ENCODE measurements at regions of chr17 and their contacts with region 1.

Region 1: DNA sequence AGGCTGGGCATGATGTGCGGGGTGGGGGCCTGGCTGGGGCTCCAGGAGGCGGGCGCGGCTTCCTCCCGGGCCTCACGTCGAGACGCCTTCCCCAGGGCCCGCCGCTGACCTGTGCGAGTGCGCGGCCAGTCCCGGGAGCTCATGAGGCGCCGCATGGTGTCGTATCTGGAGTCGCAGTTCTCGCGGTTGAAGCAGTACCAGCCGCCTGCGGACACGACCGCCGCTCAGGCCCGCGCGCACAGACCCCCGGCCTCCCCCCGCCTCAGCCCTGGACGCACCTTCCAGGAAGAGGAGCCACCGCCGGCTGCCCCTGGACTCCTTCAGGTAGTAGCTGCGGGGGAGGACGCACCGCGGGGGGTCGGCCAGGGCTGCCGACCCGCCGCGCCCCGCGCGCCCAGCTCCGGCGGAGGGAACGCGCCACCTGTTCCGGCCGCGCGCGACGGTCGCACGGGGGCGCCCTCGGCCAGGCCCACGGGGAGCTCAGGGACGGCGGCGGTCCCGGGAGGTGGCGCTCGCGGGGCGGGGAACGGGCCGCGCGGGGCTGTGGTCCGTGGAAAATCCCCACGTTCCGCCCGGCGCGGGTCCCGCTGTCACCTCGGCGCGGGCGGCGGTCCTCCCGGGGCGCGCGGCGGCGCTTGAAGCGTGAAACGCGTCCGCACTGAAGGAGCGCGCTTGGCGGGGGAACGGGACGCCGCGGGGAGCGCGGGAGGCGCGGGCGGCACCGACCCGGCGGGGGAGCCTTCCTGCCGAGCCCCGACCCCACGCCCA is 1.4 kb downstream of the NOTUM start:
- DNase-seq: peak; percentile 78
- H3K4me3 Mint-ChIP-seq: peak overlapping the region; percentile 41
- H3K27ac Mint-ChIP-seq: no peak overlapping the region
- H3K4me1 Mint-ChIP-seq: peaks cover 4% of the 10 kb centered on the region
- H3K27me3 Mint-ChIP-seq: peaks cover 15% of the 10 kb centered on the region

Region 2: GRCh38 chr17:81994593-81995462 is 35.3 kb after region 1 on chr17:
- CTCF ChIA-PET with region 1: interaction called, 10 read pairs
- intact Hi-C with region 1: no loop called
- DNase-seq: no peak
- H3K4me3 Mint-ChIP-seq: no peak overlapping the region
- H3K27ac Mint-ChIP-seq: no peak overlapping the region
- H3K4me1 Mint-ChIP-seq: peaks cover 4% of the 10 kb centered on the region
- H3K27me3 Mint-ChIP-seq: no peaks in the 10 kb centered on the region

Region 3: DNA sequence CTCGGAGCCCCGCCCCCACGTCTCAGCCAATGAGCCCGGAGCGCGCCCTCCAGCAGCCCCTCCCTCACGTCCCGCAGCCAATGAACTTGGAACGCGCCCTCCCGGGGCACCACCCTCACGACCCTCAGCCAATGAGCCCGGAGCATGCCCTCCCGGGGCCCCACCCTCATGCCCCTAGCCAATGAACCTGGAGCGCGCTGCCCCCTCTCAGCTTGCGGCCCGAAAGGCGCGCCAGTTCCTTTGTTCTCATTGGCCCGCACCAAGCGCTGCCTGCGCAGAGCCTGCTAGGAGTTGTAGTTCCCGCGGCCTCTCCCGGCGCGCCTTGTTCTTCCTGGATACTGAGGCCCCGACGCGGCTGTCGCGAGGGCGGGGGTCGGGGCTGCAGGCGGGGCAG is 63.4 kb after region 1 on chr17 and contains the start of gene LRRC45:
- CTCF ChIA-PET with region 1: interaction called, 95 read pairs
- intact Hi-C with region 1: loop called (anchors 1 kb)
- DNase-seq: peak; percentile 100
- H3K4me3 Mint-ChIP-seq: peak within 1 kb of the TSS; percentile 86
- H3K27ac Mint-ChIP-seq: no peak within 1 kb of the TSS
- H3K4me1 Mint-ChIP-seq: peaks cover 22% of the 10 kb centered on the region
- H3K27me3 Mint-ChIP-seq: no peaks in the 10 kb centered on the region
- total RNA-seq, gene LRRC45: 12.0 to 12.5 TPM

Region 4: DNA sequence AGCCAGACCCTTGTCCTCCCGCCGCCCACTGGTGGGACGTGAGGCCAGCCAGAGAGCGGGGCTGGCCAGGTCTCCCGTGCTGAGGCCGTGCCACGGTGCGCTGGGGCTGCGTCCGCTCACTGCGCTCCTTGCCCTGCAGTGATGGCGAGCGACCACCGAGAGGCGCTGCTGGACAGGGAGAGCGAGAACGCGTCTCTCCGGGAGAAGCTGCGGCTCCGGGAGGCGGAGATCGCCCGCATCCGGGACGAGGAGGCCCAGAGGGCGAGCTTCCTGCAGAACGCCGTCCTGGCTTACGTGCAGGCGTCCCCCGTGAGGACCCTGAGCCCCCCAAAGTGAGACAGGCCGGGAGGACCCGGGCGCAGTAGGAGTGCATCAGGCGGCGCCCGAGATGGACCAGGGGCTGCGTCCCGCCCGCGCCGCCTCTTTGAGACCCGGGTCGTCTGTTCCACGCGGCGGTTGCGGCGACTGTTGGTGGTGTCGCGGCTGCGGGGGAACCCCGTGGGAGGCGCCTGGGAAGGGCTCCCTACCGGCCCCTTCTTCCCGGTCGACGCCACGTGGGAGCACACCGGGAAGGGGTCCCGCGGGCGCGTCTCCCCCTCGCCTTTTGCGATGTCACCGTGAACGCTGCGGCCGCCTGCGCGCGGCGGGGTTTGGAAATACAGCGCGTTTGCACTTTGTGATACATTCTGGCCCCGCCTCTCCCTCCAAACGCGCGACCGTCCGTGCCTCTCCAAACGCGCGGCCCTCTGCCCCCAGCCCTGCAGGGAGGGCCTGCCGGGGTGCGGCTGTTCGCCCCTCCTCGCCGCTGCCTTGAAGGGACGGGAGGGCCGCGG is 71.1 kb after region 1 on chr17:
- CTCF ChIA-PET with region 1: interaction called, 16 read pairs
- intact Hi-C with region 1: no loop called
- DNase-seq: peak; percentile 90
- H3K4me3 Mint-ChIP-seq: peak overlapping the region; percentile 76
- H3K27ac Mint-ChIP-seq: no peak overlapping the region
- H3K4me1 Mint-ChIP-seq: peaks cover 8% of the 10 kb centered on the region
- H3K27me3 Mint-ChIP-seq: no peaks in the 10 kb centered on the region

Region 5: DNA sequence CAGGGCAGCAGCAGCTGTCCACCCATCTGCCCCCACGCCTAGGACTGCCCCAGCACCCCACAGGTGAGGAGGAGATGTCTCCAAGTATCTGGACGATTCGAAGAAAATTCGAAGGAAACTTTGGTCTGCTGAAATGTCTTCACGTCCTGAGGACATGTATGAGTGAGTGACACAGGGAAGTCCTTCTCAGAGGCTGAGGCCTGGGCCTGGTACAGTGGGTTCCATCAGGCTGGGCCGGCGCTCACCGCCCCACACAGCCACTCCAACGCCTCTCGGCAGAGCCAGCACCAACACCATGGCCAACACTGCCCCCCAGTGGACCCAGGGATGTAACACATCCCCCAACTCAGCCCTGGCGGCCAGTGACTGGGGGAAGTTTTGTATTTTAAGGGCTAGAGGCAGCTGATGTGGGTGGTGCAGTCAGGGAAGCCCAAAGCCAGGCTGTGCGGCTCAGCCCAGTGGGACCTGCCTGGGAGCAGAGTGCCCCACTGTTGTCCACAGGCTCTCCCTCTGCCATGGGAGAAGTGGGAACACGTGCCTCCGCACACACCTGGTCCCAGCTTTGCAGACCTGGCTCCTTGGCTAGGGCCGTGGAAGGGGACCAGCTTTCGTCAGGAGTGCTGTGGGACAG is 194.3 kb after region 1 on chr17:
- CTCF ChIA-PET with region 1: no interaction called
- intact Hi-C with region 1: loop called (anchors 5 kb)
- DNase-seq: peak; percentile 88
- H3K4me3 Mint-ChIP-seq: no peak overlapping the region
- H3K27ac Mint-ChIP-seq: no peak overlapping the region
- H3K4me1 Mint-ChIP-seq: peaks cover 7% of the 10 kb centered on the region
- H3K27me3 Mint-ChIP-seq: no peaks in the 10 kb centered on the region